MCF 10A (cell line): ENCODE measurements at regions of chr10 and their contacts with region 1.

Region 1: GRCh38 chr10:92290837-92291615 is at the starts of genes CPEB3 and MARCHF5:
- DNase-seq: peak; percentile 96
- H3K4me3 Mint-ChIP-seq: peak within 1 kb of the TSS; percentile 90
- H3K27ac Mint-ChIP-seq: peak within 1 kb of the TSS; percentile 83
- H3K4me1 Mint-ChIP-seq: peaks cover 5% of the 10 kb centered on the region
- H3K27me3 Mint-ChIP-seq: no peaks in the 10 kb centered on the region
- CTCF ChIP-seq: peak; percentile 52
- total RNA-seq, gene CPEB3: 2.8 and 4.2 TPM in 2 replicates
- total RNA-seq, gene MARCHF5: 52.1 and 53.1 TPM in 2 replicates

Region 2: GRCh38 chr10:92087750-92088395 is 203.2 kb before region 1 on chr10:
- CTCF ChIA-PET with region 1: interaction called, 49 read pairs
- POLR2A ChIA-PET with region 1: interaction called, 15 read pairs
- intact Hi-C with region 1: loop called (anchors 1 kb)
- DNase-seq: peak; percentile 89
- H3K4me3 Mint-ChIP-seq: no peak overlapping the region
- H3K27ac Mint-ChIP-seq: no peak overlapping the region
- H3K4me1 Mint-ChIP-seq: peaks cover 6% of the 10 kb centered on the region
- H3K27me3 Mint-ChIP-seq: no peaks in the 10 kb centered on the region
- CTCF ChIP-seq: peak; percentile 94

Region 3: GRCh38 chr10:92124616-92125143 is 166.3 kb before region 1 on chr10:
- CTCF ChIA-PET with region 1: interaction called, 5 read pairs
- POLR2A ChIA-PET with region 1: interaction called, 20 read pairs
- intact Hi-C with region 1: no loop called
- DNase-seq: peak; percentile 94
- H3K4me3 Mint-ChIP-seq: no peak overlapping the region
- H3K27ac Mint-ChIP-seq: no peak overlapping the region
- H3K4me1 Mint-ChIP-seq: peaks cover 26% of the 10 kb centered on the region
- H3K27me3 Mint-ChIP-seq: no peaks in the 10 kb centered on the region
- CTCF ChIP-seq: no peak

Region 4: DNA sequence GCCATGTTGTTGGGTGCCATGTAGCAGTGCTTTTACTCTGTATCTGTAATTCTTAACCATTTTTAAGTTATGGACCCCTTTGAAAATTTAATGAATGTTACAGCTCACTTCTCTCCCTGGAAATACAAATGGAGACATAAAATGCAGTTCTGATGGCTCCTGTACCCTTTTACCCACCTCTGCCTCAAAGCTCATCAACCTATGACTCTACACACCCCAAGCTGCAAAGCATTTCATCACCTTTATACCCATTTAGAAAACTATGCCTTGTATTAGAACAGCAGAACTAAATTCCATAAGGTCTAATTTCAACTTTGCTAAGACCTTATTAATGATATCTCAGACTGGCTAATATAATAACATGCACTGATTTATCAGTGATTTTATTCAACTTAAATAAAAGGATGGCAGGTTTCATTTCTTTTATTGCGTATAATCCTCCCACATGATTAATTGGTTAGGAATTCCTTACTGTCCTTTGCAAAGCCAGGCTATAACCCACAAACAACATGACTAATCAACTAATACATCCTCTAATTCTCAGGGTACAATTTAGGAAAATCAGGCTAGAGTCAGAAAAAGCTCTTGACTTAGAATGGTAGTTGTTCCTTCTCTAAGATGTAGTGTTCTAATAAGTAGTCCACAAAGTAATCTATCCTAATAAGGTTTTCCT is 68.3 kb before region 1 on chr10:
- CTCF ChIA-PET with region 1: interaction called, 5 read pairs
- POLR2A ChIA-PET with region 1: interaction called, 31 read pairs
- intact Hi-C with region 1: no loop called
- DNase-seq: peak; percentile 68
- H3K4me3 Mint-ChIP-seq: peak overlapping the region; percentile 21
- H3K27ac Mint-ChIP-seq: peak overlapping the region; percentile 1
- H3K4me1 Mint-ChIP-seq: peaks cover 20% of the 10 kb centered on the region
- H3K27me3 Mint-ChIP-seq: no peaks in the 10 kb centered on the region
- CTCF ChIP-seq: no peak

Region 5: DNA sequence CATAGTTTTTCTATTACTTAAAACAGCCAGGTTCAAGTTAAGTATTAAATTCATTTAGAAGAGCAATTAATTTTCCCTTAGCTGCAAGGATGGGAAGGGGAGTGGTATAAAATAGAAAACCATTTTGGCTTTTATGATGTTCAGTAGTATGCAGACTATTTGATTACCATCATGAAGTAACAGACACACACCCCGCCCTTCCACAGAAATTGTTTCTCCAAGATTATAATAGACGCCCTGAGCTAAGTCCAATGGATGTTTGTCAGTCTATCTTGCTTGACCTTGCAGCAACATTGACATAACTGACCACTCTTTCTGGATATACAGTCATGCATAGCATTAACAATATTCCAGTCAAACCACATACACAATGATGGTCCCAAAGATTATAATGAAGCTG is 42.5 kb before region 1 on chr10:
- CTCF ChIA-PET with region 1: interaction called, 4 read pairs
- POLR2A ChIA-PET with region 1: interaction called, 371 read pairs
- intact Hi-C with region 1: no loop called
- DNase-seq: no peak
- H3K4me3 Mint-ChIP-seq: no peak overlapping the region
- H3K27ac Mint-ChIP-seq: no peak overlapping the region
- H3K4me1 Mint-ChIP-seq: peaks cover 2% of the 10 kb centered on the region
- H3K27me3 Mint-ChIP-seq: no peaks in the 10 kb centered on the region
- CTCF ChIP-seq: no peak

Region 6: DNA sequence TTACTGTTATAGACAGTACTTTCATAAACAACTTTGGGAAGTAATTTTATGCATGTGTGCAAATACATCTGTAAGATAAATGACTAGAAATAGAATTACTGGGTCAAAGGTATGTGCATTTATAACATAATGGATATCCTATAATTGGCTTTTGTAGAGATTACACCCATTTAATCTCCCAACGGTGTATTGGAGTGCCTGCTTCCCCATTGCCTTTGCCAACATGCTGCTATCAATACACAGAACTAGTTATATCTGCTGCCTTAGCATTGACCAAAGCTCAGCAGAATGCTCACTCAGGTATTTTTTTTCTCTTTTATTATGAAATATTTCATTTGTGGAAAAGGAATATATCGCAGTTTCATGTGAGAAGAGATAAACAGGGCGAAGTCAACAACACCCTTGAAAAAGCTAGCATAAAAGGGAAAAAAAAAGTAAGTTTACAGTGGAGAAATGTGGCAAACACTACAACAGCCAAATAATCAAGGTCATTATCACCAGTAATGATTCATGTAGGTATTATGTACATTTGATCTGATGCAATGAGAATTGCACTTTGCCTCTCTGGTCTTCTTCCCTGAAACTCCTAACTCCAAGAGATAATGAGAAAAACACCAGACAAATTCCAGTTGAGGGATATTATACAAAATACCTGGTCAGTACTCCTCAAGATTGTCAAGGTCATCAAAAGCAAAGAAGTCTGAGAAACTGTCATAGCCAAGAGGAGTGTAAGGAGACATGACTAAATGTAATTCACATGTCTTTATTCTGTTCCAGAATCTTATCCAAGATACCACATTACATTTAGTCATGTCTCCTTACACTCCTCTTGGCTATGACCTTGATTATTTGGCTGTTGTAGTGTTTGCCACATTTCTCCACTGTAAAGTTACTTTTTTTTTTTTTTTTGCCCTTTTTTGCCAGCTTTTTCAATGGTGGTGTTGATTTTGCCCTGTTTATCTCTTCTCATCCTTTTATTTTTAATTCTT is 36.7 kb after region 1 on chr10:
- CTCF ChIA-PET with region 1: interaction called, 6 read pairs
- POLR2A ChIA-PET with region 1: interaction called, 25 read pairs
- intact Hi-C with region 1: no loop called
- DNase-seq: peak; percentile 35
- H3K4me3 Mint-ChIP-seq: no peak overlapping the region
- H3K27ac Mint-ChIP-seq: peak overlapping the region; percentile 80
- H3K4me1 Mint-ChIP-seq: peaks cover 37% of the 10 kb centered on the region
- H3K27me3 Mint-ChIP-seq: no peaks in the 10 kb centered on the region
- CTCF ChIP-seq: no peak

Region 7: DNA sequence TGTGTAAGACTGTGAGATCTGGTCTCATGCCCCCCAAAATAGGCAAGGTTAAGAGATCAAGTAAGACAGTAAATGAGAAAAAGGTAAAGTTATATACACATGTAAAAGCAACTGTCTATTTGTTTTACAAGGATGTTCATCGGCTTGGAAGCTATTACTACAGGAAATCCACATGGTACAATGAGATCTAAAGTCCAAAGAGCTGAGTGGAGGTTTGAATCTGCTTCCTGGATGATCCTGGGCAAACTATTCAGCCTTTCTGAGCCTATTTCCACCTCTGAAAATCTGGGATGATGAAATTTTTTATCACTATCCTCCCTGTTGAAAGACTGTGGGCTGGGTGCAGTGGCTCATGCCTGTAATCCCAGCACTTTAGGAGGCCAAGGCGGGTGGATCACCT is 159.9 kb after region 1 on chr10:
- CTCF ChIA-PET with region 1: no interaction called
- POLR2A ChIA-PET with region 1: no interaction called
- intact Hi-C with region 1: no loop called
- DNase-seq: no peak
- H3K4me3 Mint-ChIP-seq: no peak overlapping the region
- H3K27ac Mint-ChIP-seq: no peak overlapping the region
- H3K4me1 Mint-ChIP-seq: no peaks in the 10 kb centered on the region
- H3K27me3 Mint-ChIP-seq: no peaks in the 10 kb centered on the region
- CTCF ChIP-seq: no peak